Activated CD8-positive, alpha-beta T cell treated with anti-CD3 and anti-CD28 coated beads, Interleukin-2, amount 10 ng/mL, durations not matched to agents 7 days and 5 days (primary cell): ENCODE measurements at regions of chr4 and their contacts with region 1.

Region 1: GRCh38 chr4:25993395-25994185 is 79.6 kb downstream of the SMIM20 start:
- DNase-seq: no peak
- ATAC-seq: no peak
- H3K4me3 Mint-ChIP-seq: no peak overlapping the region
- H3K27ac Mint-ChIP-seq: no peak overlapping the region
- H3K4me1 Mint-ChIP-seq: peaks cover 3% of the 10 kb centered on the region
- H3K27me3 Mint-ChIP-seq: peaks cover 8% of the 10 kb centered on the region

Region 2: GRCh38 chr4:25943805-25944204 is 49.8 kb before region 1 on chr4:
- CTCF ChIA-PET with region 1: interaction called, 10 read pairs
- POLR2A ChIA-PET with region 1: no interaction called
- DNase-seq: no peak
- ATAC-seq: no peak
- H3K4me3 Mint-ChIP-seq: no peak overlapping the region
- H3K27ac Mint-ChIP-seq: no peak overlapping the region
- H3K4me1 Mint-ChIP-seq: peaks cover 4% of the 10 kb centered on the region
- H3K27me3 Mint-ChIP-seq: peaks cover 23% of the 10 kb centered on the region

Region 3: DNA sequence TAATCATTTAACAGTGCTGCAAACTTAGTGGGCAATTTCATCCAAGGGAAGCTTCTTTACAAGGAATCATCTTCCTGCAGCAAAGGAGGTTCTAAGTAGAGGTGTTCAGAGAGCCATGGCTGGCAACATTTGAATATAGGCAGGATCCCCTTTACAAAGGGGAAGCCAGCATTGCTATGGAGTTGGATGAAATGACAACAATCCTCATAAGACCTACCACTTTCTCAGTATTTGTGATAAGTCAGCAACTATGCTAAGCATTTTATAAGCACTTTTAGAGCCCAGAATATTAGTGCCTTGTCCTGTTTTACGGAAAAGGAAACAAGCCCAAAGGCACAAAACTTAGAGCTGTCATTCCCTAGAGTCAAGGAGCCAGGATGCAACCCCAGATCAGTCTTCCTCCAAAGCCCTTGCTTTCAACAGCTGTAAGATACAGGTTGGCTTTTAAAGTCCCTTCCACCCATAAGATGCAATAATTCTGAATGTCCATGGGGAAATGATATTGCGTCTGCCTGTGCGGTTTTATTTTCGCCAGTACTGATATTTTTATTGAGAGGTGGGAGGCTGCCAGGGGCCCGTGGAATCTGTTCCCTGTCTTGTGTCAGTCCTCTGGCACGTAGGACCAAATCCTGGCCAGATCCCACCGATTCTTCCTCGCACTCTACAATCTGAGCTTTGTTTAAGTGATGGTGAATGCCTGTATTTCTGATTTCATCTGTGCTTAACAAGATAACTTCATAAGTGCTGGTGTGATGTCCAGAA is 20.4 kb before region 1 on chr4:
- CTCF ChIA-PET with region 1: no interaction called
- POLR2A ChIA-PET with region 1: no interaction called
- DNase-seq: no peak
- ATAC-seq: no peak
- H3K4me3 Mint-ChIP-seq: no peak overlapping the region
- H3K27ac Mint-ChIP-seq: no peak overlapping the region
- H3K4me1 Mint-ChIP-seq: no peaks in the 10 kb centered on the region
- H3K27me3 Mint-ChIP-seq: peaks cover 9% of the 10 kb centered on the region

Region 4: DNA sequence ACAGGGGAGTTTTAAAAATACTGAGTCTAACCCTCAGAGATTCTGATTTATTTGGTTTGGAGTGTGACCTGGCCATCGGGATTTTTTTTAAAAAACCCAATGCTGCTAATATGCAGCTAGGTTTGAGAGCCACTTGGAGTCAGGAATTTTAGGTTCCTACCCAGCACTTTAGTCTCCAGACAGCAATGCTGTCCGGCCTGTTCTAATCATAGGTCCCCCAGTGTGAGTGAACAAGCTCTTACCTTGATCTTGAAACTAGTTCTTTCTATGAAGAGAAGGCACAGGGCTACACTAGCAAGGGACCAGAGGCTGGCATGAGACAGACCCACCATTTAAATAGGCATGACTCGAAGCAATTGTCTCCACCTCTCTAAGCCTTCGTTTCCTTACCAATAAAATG is 23.9 kb after region 1 on chr4:
- CTCF ChIA-PET with region 1: interaction called, 14 read pairs
- POLR2A ChIA-PET with region 1: no interaction called
- DNase-seq: no peak
- ATAC-seq: no peak
- H3K4me3 Mint-ChIP-seq: no peak overlapping the region
- H3K27ac Mint-ChIP-seq: no peak overlapping the region
- H3K4me1 Mint-ChIP-seq: peaks cover 4% of the 10 kb centered on the region
- H3K27me3 Mint-ChIP-seq: peaks cover 29% of the 10 kb centered on the region